ENCODE measurements at regions of chr11 and their contacts with region 1.

Region 1: GRCh38 chr11:61803889-61804647 is 11.4 kb downstream of the FEN1 start:
- DNase-seq: no peak
- H3K4me3 ChIP-seq: no peak overlapping the region
- H3K27ac ChIP-seq: no peak overlapping the region
- H3K4me1 ChIP-seq: no peaks in the 10 kb centered on the region
- H3K27me3 ChIP-seq: no peaks in the 10 kb centered on the region
- CTCF ChIP-seq: no peak
- EP300 ChIP-seq: no peak
- POLR2A ChIP-seq: no peak

Region 2: GRCh38 chr11:61899146-61899841 is 95.2 kb after region 1 on chr11:
- intact Hi-C with region 1: loop called (anchors 10 kb)
- DNase-seq: peak; percentile 87 to 93
- H3K4me3 ChIP-seq: no peak overlapping the region
- H3K27ac ChIP-seq: peak overlapping the region in 3 of 5 donors; percentile 14 to 36 (median 15)
- H3K4me1 ChIP-seq: peaks cover 0 to 20% (median 10%) of the 10 kb centered on the region in 4 donors
- H3K27me3 ChIP-seq: no peaks in the 10 kb centered on the region
- CTCF ChIP-seq: peak in 6 of 7 experiments; percentile 74 to 100 (median 99)
- EP300 ChIP-seq: no peak
- POLR2A ChIP-seq: no peak

Region 3: GRCh38 chr11:62108017-62108750 is 304.1 kb after region 1 on chr11:
- intact Hi-C with region 1: loop called (anchors 10 kb)
- DNase-seq: peak in 1 of 2 donors; percentile 87
- H3K4me3 ChIP-seq: no peak overlapping the region
- H3K27ac ChIP-seq: no peak overlapping the region
- H3K4me1 ChIP-seq: peaks cover 12 to 45% (median 26%) of the 10 kb centered on the region in 4 donors
- H3K27me3 ChIP-seq: no peaks in the 10 kb centered on the region
- CTCF ChIP-seq: peak in 5 of 7 experiments; percentile 68 to 83 (median 72)
- EP300 ChIP-seq: no peak
- POLR2A ChIP-seq: no peak

Region 4: GRCh38 chr11:62337303-62338181 is 533.5 kb after region 1 on chr11 and contains the start of gene ASRGL1:
- intact Hi-C with region 1: no loop called
- DNase-seq: peak; percentile 94
- H3K4me3 ChIP-seq: peak within 1 kb of the TSS; percentile 66 to 74 (median 70)
- H3K27ac ChIP-seq: peak within 1 kb of the TSS; percentile 44 to 81 (median 74)
- H3K4me1 ChIP-seq: peaks cover 13 to 37% (median 32%) of the 10 kb centered on the region in 4 donors
- H3K27me3 ChIP-seq: no peaks in the 10 kb centered on the region
- CTCF ChIP-seq: no peak
- EP300 ChIP-seq: no peak
- POLR2A ChIP-seq: no peak
- total RNA-seq, gene ASRGL1: 2.9 to 82.0 (median 57.6) TPM